Panc1 (cell line): ENCODE measurements at regions of chr12 and their contacts with region 1.

Region 1: GRCh38 chr12:48105862-48106680 is at the start of gene SENP1:
- DNase-seq: peak; percentile 58
- ATAC-seq: peak; percentile 95
- H3K4me3 ChIP-seq: peak within 1 kb of the TSS; percentile 94 to 100
- H3K27ac ChIP-seq: peak within 1 kb of the TSS; percentile 100
- H3K4me1 ChIP-seq: peaks cover 20% of the 10 kb centered on the region
- H3K27me3 ChIP-seq: no peaks in the 10 kb centered on the region
- CTCF ChIP-seq: no peak
- total RNA-seq, gene SENP1: 35.2 TPM

Region 2: DNA sequence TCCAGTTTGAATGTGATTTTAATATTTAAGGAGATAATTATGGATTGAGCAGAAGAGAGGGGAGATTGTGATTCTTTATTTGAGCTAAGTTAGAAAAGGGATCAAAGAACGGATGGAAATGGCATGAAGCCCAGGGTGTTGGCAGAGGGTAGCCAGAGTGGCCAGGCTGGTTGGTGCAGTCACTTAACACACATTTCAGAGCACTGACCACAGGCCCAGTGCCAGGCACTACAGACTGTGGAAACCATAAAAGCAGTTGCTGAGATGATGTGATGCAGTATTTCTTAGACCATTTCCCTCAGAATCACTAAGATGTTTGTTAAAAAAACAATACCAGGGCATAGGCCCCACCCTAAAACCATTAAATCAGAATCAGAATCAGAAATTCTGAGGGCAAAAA is 858.6 kb before region 1 on chr12:
- CTCF ChIA-PET with region 1: no interaction called
- POLR2A ChIA-PET with region 1: no interaction called
- in situ Hi-C with region 1: no loop called
- intact Hi-C with region 1: no loop called
- DNase-seq: no peak
- ATAC-seq: no peak
- H3K4me3 ChIP-seq: no peak overlapping the region
- H3K27ac ChIP-seq: no peak overlapping the region
- H3K4me1 ChIP-seq: no peaks in the 10 kb centered on the region
- H3K27me3 ChIP-seq: no peaks in the 10 kb centered on the region
- CTCF ChIP-seq: no peak

Region 3: DNA sequence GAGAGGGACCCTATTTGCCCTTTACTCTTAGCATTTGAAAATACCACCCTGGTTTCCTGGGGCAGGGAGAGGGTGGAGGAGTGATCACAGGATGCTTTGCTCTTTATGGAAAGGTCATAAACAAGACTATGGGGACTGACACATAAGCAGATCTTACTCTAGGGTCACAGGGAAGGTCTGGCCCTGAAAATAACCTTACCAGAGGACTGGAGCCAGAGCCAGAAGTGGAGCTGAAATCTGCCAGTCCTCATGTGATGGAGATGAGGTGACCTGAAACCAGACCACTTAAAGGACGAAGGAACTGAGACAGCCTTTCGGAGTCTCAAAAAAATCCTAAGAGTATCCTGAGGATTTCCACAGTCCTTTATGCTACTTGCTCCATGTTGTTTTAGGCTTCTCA is 25.4 kb after region 1 on chr12:
- CTCF ChIA-PET with region 1: no interaction called
- POLR2A ChIA-PET with region 1: interaction called, 15 read pairs
- in situ Hi-C with region 1: no loop called
- intact Hi-C with region 1: no loop called
- DNase-seq: no peak
- ATAC-seq: no peak
- H3K4me3 ChIP-seq: no peak overlapping the region
- H3K27ac ChIP-seq: no peak overlapping the region
- H3K4me1 ChIP-seq: no peaks in the 10 kb centered on the region
- H3K27me3 ChIP-seq: no peaks in the 10 kb centered on the region
- CTCF ChIP-seq: no peak

Region 4: DNA sequence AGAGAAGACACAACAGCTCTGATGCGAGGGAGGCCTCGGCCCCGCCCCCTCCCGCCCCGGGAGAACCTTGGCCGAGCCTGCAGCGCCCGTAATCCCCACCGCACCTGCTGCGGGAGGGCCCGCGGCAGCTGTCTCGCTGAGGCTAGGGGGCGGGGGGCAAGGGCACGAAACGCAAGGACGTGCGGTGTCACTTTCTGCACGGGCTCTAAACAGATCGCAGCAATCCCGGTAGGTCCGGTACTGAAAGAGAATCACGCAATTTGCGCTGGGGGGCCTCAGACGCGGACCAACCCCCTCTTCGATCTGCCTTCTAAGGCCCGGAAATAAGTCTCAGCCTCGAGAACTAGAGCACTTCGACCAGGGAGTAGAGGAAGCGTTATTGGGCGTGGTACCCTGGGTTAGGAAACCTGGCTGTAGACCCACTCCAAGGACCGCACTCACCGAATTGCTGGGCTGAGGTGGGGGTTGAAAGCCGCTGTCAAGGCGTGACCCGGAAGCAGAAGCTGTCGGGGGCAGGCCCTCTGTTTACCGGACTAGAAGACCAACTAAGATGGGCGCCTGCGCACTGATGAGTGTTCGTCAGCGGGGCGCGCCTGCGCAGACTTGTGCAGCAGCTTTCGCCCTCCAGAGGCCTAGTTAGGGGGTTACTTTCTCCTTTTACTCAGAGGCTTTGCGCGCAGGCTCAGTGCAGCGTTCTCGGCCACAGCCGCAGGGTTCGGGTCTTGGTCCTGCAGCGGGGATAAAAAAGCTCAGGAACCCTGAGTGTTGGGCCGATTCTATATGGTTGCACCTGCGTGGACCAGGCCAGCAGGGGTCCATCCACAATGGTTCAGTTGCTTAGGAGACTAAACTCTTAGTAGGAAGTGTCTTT is 51.2 kb after region 1 on chr12 and contains the start of gene ASB8:
- CTCF ChIA-PET with region 1: no interaction called
- POLR2A ChIA-PET with region 1: no interaction called
- in situ Hi-C with region 1: no loop called
- intact Hi-C with region 1: loop called (anchors 10 kb)
- DNase-seq: peak; percentile 98
- ATAC-seq: peak; percentile 99
- H3K4me3 ChIP-seq: peak within 1 kb of the TSS; percentile 98
- H3K27ac ChIP-seq: peak within 1 kb of the TSS; percentile 94
- H3K4me1 ChIP-seq: peaks cover 10% of the 10 kb centered on the region; the same call in 1 of the 2 replicates
- H3K27me3 ChIP-seq: no peaks in the 10 kb centered on the region
- CTCF ChIP-seq: peak; percentile 70
- total RNA-seq, gene ASB8: 17.1 TPM